HEK293 (cell line): ENCODE measurements at regions of chr6 and their contacts with region 1.

Region 1: DNA sequence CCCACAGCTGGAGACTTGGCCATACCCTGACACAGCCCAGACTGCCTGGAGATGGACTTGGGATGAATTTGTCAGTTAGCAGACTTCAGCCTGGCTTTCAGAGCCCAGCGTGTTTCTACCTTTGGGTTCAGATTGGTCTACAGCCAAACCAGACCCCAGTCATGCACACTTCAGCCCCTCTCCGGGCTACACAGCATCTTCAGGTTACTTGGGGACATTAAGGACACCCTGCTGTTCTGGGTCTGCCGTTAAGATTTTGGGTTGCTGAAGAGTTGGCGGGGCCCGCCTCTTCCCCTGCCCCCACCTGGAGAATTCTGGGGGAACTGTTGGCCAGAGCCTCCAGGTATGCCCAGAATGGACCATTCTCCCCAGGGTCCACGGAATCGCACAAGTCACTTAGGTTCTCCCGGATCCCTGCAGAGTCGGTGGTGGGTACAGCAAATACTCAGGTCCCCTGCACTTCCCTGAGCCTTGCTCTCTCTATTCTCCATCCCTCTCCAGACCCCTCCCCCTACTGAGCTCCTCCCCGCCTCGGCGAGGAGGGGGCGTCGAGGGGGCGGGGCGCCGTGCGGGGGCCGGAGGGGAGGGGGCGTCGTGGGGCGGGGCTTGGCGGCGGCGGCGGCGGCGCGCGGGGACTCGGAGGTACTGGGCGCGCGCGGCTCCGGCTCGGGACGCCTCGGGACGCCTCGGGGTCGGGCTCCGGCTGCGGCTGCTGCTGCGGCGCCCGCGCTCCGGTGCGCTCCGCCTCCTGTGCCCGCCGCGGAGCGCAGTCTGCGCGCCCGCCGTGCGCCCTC is at the start of gene PTK7:
- H3K4me3 ChIP-seq: peak within 1 kb of the TSS; percentile 88
- H3K27ac ChIP-seq: peak within 1 kb of the TSS; percentile 87
- H3K4me1 ChIP-seq: peaks cover 14% of the 10 kb centered on the region
- CTCF ChIP-seq: no peak

Region 2: GRCh38 chr6:43120944-43121913 is 45.4 kb after region 1 on chr6:
- CTCF ChIA-PET with region 1: interaction called, 8 read pairs
- POLR2A ChIA-PET with region 1: interaction called, 15 read pairs
- H3K4me3 ChIP-seq: no peak overlapping the region
- H3K27ac ChIP-seq: no peak overlapping the region
- H3K4me1 ChIP-seq: peaks cover 6% of the 10 kb centered on the region
- CTCF ChIP-seq: no peak